Panc1 (cell line): ENCODE measurements at regions of chr9 and their contacts with region 1.

Region 1: GRCh38 chr9:109401168-109401989 is 80.5 kb upstream of the EPB41L4B start:
- DNase-seq: peak; percentile 24
- ATAC-seq: peak; percentile 88
- H3K4me3 ChIP-seq: no peak overlapping the region
- H3K27ac ChIP-seq: no peak overlapping the region
- H3K4me1 ChIP-seq: no peaks in the 10 kb centered on the region
- H3K27me3 ChIP-seq: no peaks in the 10 kb centered on the region
- CTCF ChIP-seq: peak; percentile 83

Region 2: DNA sequence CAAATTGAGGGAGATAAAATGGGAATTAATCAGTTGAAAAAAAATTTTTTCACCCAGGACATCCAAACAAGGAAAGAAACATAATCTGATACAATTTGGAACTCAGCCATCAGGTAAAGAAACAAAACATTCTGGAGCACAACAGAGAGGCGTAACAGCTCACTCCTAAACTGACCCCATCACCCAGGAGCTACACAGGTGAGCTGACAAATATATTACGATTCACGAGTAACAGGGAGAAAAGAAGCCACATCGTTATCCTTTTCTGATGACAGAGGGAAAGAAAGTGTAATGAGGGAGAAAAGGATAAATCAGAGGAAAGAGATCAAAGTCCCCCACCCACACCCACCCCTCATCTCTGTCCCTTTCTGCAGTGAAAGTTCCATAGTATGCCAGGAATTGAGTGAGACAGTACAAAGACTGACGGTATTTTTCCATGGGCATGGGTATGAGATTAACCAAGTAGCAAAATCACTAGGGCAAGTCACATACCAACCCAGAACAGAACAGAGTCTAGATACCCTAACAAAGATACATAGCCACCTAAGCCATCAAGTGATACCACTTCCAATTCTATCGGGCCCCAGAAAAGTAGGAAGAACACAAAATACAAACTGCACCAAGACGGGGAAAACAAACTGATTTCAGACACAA is 327.0 kb before region 1 on chr9:
- CTCF ChIA-PET with region 1: no interaction called
- POLR2A ChIA-PET with region 1: no interaction called
- in situ Hi-C with region 1: no loop called
- intact Hi-C with region 1: no loop called
- DNase-seq: no peak
- ATAC-seq: no peak
- H3K4me3 ChIP-seq: no peak overlapping the region
- H3K27ac ChIP-seq: no peak overlapping the region
- H3K4me1 ChIP-seq: no peaks in the 10 kb centered on the region
- H3K27me3 ChIP-seq: no peaks in the 10 kb centered on the region
- CTCF ChIP-seq: no peak

Region 3: DNA sequence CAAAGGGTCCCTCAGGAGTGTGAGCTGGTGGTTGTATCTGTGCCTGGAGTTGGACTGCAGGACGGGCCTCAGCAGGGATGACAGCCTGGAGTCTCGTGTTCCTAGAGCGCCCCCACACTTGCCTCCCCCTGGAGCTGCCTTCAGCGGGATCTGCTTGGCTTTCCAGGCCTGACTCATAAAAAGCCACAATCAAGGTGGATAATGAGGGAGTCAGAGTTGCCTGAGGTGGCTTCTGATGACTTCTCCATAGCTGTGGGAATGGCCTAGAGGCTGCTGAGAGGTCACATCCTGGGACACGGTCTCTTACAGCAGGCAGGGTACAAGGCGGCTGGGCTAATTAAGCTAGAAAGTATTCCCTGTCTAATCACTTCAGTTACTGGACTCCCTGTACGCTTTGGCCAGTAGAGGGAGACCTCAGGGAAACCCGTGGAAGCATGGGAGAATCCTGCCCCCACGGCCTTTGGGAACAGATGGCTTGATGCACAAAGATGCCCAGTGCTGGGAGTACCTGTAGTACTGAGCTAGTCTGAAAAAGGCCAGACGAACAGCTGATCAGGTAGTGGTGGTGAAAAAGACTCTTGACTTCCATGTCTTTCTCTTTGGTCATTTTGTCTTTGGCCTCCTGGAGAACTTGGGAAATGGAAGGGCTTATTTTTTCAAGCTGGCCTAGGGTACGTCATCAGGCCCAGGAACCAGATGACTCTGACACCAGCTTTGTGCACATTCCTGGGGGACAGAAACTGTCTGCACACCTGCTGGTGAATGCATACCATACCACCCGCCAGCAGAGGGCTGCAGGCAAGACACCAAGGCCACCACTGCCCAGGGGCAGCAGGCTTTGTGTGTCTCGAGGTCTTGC is 218.2 kb before region 1 on chr9:
- CTCF ChIA-PET with region 1: no interaction called
- POLR2A ChIA-PET with region 1: no interaction called
- in situ Hi-C with region 1: no loop called
- intact Hi-C with region 1: loop called (anchors 10 kb)
- DNase-seq: no peak
- ATAC-seq: peak; percentile 93
- H3K4me3 ChIP-seq: no peak overlapping the region
- H3K27ac ChIP-seq: no peak overlapping the region
- H3K4me1 ChIP-seq: no peaks in the 10 kb centered on the region
- H3K27me3 ChIP-seq: no peaks in the 10 kb centered on the region
- CTCF ChIP-seq: peak; percentile 76